Breast epithelium (tissue), 4 donors: ENCODE measurements at regions of chr13 and their contacts with region 1.

Region 1: DNA sequence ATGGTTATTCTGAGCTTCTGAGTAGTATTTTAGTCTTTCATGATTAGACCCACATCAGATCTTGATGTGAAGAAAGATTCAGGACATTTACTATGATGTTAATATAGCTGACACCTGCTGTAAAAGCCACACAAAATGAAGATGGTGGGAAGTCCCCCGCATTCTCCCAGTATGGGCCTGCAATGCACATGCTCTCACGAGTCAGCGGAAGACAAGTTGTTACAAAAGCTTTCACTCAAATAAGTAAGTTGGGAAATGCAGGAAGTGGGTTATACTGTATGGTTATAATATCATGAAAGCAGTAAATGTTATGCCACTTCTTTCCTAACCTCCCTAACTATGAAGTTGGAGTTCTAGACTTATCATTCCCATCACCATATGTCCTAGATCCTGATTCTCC is 171.9 kb downstream of the KLF5 start:
- DNase-seq: no peak
- H3K4me3 ChIP-seq: no peak overlapping the region
- H3K27ac ChIP-seq: no peak overlapping the region
- H3K4me1 ChIP-seq: no peaks in the 10 kb centered on the region
- H3K27me3 ChIP-seq: no peaks in the 10 kb centered on the region
- CTCF ChIP-seq: no peak
- POLR2A ChIP-seq: no peak

Region 2: DNA sequence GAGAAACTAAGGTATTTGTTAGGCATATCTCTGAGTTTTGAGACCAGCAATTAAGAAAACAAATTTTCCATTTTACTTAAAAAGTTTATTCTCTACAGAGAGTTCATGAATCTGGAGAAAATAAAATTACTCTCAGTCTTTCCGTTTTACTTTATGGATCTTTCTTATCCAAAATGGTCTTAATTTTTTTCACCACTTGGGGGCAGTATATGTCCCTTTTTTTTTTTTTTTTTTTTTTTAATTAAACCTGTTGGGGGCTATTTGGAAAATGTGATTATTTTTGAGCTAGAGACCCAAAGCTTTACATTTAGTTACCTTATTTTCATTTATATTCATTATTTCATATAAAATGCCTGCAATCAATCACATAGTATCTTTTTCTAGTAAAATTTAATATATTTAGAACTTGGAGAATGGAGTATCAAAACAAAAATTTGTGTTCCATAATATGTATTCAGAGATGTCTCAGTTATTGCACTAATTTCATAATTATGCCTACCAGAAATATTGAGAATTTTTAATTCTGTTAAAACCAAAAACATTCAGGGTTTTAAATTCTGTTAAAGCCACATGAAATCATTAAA is 421.7 kb before region 1 on chr13:
- intact Hi-C with region 1: loop called (anchors 10 kb)
- DNase-seq: no peak
- H3K4me3 ChIP-seq: no peak overlapping the region
- H3K27ac ChIP-seq: no peak overlapping the region
- H3K4me1 ChIP-seq: no peaks in the 10 kb centered on the region
- H3K27me3 ChIP-seq: no peaks in the 10 kb centered on the region
- CTCF ChIP-seq: peak in 2 of 3 donors; percentile 30 to 32
- POLR2A ChIP-seq: no peak

Region 3: DNA sequence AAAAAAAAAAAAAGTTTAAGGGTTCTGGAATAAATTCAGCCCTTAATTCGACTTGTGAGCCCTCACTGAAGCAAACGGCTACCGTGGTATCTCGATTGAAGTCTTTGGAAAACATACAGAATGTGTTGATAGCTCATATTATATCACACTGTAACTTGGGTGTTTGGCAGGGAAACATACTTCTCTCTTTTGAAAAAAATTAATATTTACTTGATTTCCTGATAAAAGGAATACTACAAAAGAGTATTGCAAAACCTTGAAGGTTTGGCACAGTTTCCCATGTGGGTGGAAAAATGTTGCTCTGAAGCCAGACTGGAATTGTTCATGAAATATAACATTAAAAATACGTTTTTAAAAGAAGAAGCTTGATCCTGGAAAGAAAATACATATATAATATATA is 30.3 kb before region 1 on chr13:
- intact Hi-C with region 1: no loop called
- DNase-seq: peak in 1 of 2 donors; percentile 30
- H3K4me3 ChIP-seq: no peak overlapping the region
- H3K27ac ChIP-seq: peak overlapping the region in 1 of 2 donors; percentile 41
- H3K4me1 ChIP-seq: no peaks in the 10 kb centered on the region
- H3K27me3 ChIP-seq: no peaks in the 10 kb centered on the region
- CTCF ChIP-seq: no peak
- POLR2A ChIP-seq: no peak